ENCODE measurements at regions of chr6 and their contacts with region 1.

Region 1: DNA sequence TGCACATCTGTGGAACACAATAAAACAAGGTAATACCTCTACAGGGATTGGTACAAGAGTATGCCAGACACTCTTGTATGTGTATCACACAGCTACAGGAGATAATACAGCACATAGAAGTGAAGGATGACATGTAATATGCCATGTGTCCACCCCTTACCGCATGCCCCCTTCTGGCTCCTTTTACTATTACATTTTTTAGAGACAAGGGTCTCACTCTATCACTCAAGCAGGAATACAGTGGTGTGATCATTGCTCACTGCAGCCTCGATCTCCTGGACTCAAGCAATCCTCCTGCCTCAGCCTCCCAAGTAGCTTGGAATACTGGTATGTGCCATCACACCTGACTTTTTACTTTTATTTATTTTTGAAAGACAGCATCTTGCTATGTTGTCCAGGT is 4.2 kb upstream of the NCR3 start:
- DNase-seq: no peak
- H3K4me3 ChIP-seq: no peak overlapping the region
- H3K27ac ChIP-seq: no peak overlapping the region
- H3K4me1 ChIP-seq: peaks cover 0 to 5% (median 0%) of the 10 kb centered on the region in 4 donors
- H3K27me3 ChIP-seq: no peaks in the 10 kb centered on the region
- CTCF ChIP-seq: peak in 2 of 3 experiments; percentile 20 to 23
- EP300 ChIP-seq: no peak
- POLR2A ChIP-seq: no peak

Region 2: DNA sequence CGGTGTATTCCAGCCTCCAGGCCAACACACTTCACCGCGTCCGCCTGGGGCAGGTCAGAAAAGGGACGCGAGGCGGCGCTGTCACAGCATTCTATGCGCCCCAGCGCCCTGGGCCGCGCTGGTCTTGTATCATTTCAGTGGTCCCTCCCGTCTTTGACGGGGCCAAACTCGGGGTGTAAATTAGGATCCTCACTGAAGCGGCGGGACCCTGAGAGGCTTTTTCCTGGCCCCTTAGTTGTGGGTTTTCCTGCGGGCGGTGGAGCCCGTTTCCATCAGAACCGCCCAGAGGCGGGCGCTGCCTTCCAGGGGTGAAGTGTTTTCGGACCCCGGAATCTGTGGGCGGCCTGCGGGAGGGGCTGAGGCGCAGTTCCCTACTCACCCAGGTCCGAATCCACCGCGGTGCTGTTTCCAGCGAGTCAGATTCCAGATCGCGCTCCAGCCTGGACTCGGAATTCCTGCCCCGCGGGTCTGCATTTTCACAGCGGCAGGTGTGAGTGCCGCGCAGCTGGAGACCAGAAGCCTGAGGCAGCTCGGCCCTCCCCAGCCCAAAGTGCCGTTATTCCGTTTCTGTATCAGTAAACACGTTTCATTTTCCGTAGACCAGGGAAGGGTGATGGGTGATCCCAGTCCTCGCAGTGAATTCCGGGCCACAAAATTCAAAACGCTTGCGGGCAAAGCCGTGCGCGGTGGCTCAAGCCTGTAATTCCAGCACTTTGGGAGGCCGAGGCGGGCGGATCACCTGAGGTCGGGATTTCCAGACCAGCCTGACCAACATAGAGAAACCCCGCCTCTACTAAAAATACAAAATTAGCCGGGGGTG is 102.9 kb before region 1 on chr6:
- intact Hi-C with region 1: loop called (anchors 5 kb)
- DNase-seq: peak; percentile 95
- H3K4me3 ChIP-seq: peak overlapping the region; percentile 54 to 78 (median 56)
- H3K27ac ChIP-seq: peak overlapping the region; percentile 66 to 84 (median 68)
- H3K4me1 ChIP-seq: peaks cover 10 to 47% (median 40%) of the 10 kb centered on the region in 4 donors
- H3K27me3 ChIP-seq: peaks cover 0 to 66% (median 14%) of the 10 kb centered on the region in 4 donors
- CTCF ChIP-seq: peak; percentile 61 to 78 (median 77)
- EP300 ChIP-seq: no peak
- POLR2A ChIP-seq: no peak

Region 3: DNA sequence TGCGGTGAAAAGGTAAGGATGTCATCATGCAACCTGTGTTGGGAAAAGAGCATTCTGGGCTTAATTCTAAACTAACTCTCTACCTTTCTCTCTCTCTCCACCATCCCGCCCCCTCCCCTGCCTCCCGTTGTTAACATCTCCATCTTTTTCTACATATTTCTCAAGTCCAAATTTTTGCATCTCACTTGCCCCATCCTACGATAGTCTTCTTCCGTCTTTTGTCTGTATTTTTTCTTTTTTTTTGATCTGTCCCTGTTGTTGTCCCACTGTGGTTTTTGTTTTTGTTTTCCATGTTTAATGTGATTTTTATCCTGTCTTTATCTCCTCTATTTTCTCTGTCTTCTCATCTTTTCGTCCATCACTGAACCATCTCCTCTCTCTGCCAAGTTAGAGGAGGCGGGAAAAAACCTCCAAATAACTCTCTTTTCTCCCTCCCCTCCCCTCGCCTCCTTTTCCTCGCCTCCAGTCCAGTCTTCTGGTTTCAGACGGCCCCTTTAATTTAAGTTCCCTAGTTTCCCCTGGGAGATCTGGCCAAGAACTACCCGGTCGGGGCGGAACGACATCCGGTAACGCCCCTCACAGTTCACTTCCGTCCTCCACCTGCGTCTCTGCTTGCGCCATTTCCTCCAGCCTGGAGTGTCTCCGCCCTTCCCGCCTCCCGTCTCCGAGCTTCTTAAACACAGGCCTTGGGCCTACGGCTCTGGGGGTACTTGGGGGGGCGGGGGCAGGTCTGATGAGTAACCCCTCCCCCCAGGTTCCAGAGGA is 49.9 kb before region 1 on chr6 and contains the start of gene NFKBIL1:
- intact Hi-C with region 1: loop called (anchors 1 kb)
- DNase-seq: peak; percentile 99
- H3K4me3 ChIP-seq: peak within 1 kb of the TSS; percentile 49 to 60 (median 54)
- H3K27ac ChIP-seq: peak within 1 kb of the TSS; percentile 82 to 86 (median 84)
- H3K4me1 ChIP-seq: peaks cover 20 to 54% (median 50%) of the 10 kb centered on the region in 4 donors
- H3K27me3 ChIP-seq: no peaks in the 10 kb centered on the region
- CTCF ChIP-seq: no peak
- EP300 ChIP-seq: no peak
- POLR2A ChIP-seq: no peak
- total RNA-seq, gene NFKBIL1: 24.4 to 42.6 (median 29.6) TPM

Region 4: DNA sequence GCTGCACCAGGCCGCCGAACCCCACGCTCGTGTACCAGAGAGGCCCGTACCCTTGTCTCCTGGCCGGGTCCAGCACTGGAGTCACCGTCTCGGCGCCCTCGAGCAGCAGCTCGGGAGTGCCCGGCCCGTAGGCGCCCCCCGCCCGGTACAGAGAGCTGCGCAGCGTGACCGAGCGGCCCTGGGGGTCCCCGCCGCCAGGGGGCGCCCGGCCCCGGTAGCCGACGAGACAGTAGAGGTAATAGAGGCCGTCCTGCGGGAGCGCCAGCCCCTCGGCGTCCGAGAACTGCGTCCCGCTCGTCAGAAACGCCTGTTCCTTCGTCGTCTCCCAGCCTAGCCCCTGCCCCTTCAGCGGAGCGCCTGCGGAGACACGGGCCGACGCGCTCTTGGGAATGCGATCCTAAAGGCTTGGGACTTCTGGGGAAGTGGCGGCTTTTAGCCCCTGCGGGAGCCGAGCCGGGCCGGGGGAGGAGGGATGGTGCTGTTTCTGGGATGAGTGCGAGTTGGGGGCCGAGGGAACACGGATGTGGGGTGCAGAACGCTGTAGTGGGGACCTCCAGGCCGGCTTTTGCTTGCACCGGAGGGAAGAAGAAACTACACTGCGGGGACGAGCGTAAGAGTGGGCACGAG is 16.1 kb before region 1 on chr6:
- intact Hi-C with region 1: loop called (anchors 1 kb)
- DNase-seq: peak; percentile 97
- H3K4me3 ChIP-seq: peak overlapping the region; percentile 67 to 86 (median 70)
- H3K27ac ChIP-seq: peak overlapping the region; percentile 77 to 84 (median 80)
- H3K4me1 ChIP-seq: peaks cover 17 to 25% (median 22%) of the 10 kb centered on the region in 4 donors
- H3K27me3 ChIP-seq: no peaks in the 10 kb centered on the region
- CTCF ChIP-seq: peak in 2 of 3 experiments; percentile 94
- EP300 ChIP-seq: no peak
- POLR2A ChIP-seq: no peak

Measured in esophagus muscularis mucosa (tissue), 4 donors.